Gastrocnemius medialis (tissue), 4 donors: ENCODE measurements at regions of chr15 and their contacts with region 1.

Region 1: DNA sequence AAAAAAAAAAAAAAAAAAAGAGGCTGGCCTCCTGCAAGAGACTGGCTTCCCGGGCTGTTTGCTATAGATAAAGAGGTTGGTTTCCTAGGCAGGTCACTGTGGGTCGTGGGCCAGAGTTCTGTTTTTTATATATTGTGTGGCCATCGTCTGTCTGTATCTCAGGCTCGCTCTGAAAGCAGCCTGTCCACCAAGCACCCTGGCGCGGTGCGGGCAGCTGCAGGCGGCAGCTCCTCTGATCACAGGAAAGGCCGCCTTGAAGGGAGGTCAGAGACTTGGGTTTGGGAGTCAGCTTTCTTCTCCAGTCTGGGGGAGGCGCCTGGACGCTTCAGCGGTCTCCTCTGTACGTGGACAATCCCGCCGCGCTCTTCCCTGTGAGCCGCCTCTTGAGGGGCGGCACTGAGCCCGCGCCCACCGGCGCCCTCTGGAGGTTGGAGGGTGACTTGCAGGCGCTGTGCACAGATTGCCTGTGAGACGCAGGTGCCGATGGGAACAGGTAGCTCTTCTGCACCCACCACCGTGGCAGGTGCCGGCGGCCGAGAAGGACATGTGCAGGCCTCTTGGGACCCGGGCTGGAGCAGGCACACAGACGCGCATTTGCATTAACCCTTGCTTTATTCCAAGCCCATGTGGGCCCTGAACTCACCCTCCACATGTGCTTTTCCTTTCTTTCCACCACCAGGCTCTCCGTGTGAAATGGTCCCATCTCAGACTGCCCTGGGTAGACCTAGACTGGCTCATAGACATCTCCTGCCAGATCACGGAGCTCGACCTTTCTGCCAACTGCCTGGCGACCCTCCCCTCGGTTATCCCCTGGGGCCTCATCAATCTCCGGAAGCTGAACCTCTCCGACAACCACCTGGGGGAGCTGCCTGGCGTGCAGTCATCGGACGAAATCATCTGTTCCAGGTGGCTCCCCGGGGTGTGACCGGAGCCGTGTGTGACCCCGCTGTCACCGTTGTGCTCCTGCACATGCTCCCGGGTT is 89.3 kb downstream of the LRRK1 start:
- DNase-seq: peak; percentile 35 to 61
- ATAC-seq: peak; percentile 63 to 84
- H3K4me3 ChIP-seq: peak overlapping the region; percentile 38 to 70 (median 52)
- H3K27ac ChIP-seq: no peak overlapping the region
- H3K4me1 ChIP-seq: no peaks in the 10 kb centered on the region
- H3K27me3 ChIP-seq: no peaks in the 10 kb centered on the region
- CTCF ChIP-seq: peak; percentile 58 to 97 (median 88)
- POLR2A ChIP-seq: no peak

Region 2: GRCh38 chr15:100341662-100342560 is 666.5 kb before region 1 on chr15 and contains the start of gene ADAMTS17:
- in situ Hi-C with region 1: loop called in 1 of 4 experiments (anchors 10 kb)
- intact Hi-C with region 1: loop called (anchors 5 kb)
- DNase-seq: peak; percentile 96 to 97
- ATAC-seq: peak; percentile 98 to 99
- H3K4me3 ChIP-seq: peak within 1 kb of the TSS; percentile 65 to 96 (median 76)
- H3K27ac ChIP-seq: peak within 1 kb of the TSS; percentile 78 to 90 (median 88)
- H3K4me1 ChIP-seq: peaks cover 7 to 10% of the 10 kb centered on the region in 2 donors
- H3K27me3 ChIP-seq: no peaks in the 10 kb centered on the region
- CTCF ChIP-seq: peak; percentile 85 to 98 (median 95)
- POLR2A ChIP-seq: peak; percentile 94 to 99
- total RNA-seq, gene ADAMTS17: 5.0 to 16.2 (median 11.6) TPM

Region 3: GRCh38 chr15:100627789-100628395 is 380.6 kb before region 1 on chr15:
- in situ Hi-C with region 1: loop called (anchors 5 to 10 kb)
- intact Hi-C with region 1: loop called (anchors 1 kb)
- DNase-seq: peak; percentile 35 to 50
- ATAC-seq: peak; percentile 83 to 91
- H3K4me3 ChIP-seq: no peak overlapping the region
- H3K27ac ChIP-seq: no peak overlapping the region
- H3K4me1 ChIP-seq: peaks cover 7 to 9% of the 10 kb centered on the region in 2 donors
- H3K27me3 ChIP-seq: no peaks in the 10 kb centered on the region
- CTCF ChIP-seq: peak; percentile 78 to 82 (median 81)
- POLR2A ChIP-seq: no peak

Region 4: DNA sequence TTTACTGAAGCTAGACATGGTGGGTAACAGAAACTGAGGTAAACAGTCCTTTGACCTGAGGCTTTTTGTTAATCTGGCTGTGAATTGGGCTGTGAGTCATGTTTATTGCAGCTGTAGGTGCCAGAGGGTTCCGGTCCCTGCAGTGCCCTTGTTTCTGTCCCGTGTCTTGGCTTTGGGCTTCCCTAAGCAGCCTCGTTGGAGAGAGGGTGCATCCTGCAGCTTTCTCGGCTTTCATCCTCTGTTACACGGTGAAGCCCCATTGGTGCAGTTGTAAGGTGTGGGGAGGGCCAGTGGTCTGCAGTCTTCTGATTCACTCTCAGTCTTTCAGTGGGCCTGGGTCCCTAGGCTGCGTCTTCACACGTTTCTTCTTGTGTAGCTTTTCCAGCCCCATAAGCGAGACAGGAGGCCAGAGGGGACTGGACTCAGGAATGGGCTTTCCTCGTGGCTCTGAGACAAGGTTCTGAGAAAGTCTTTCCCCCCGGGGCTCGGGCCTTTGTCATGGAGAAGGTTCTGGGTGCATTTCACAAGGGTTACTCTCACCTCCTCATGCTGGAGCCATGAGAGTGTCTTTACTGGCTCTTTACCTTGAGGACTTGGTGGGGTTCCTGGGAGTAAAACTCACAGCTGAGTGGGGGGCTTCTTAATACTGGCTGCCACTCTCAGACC is 372.9 kb before region 1 on chr15:
- in situ Hi-C with region 1: loop called in 1 of 4 experiments (anchors 10 kb)
- intact Hi-C with region 1: no loop called
- DNase-seq: no peak
- ATAC-seq: no peak
- H3K4me3 ChIP-seq: no peak overlapping the region
- H3K27ac ChIP-seq: no peak overlapping the region
- H3K4me1 ChIP-seq: peaks cover 5 to 16% of the 10 kb centered on the region in 2 donors
- H3K27me3 ChIP-seq: no peaks in the 10 kb centered on the region
- CTCF ChIP-seq: no peak
- POLR2A ChIP-seq: no peak

Region 5: GRCh38 chr15:100671858-100672543 is 336.4 kb before region 1 on chr15:
- in situ Hi-C with region 1: no loop called
- intact Hi-C with region 1: loop called (anchors 2 kb)
- DNase-seq: no peak
- ATAC-seq: peak in 1 of 2 donors; percentile 54
- H3K4me3 ChIP-seq: peak overlapping the region in 1 of 4 donors; percentile 7
- H3K27ac ChIP-seq: no peak overlapping the region
- H3K4me1 ChIP-seq: peaks cover 0 to 4% of the 10 kb centered on the region in 2 donors
- H3K27me3 ChIP-seq: peaks cover 0 to 4% (median 3%) of the 10 kb centered on the region in 3 donors
- CTCF ChIP-seq: peak in 3 of 5 experiments; percentile 11 to 40 (median 25)
- POLR2A ChIP-seq: no peak

Region 6: GRCh38 chr15:100873029-100873677 is 135.3 kb before region 1 on chr15:
- in situ Hi-C with region 1: no loop called
- intact Hi-C with region 1: loop called (anchors 10 kb)
- DNase-seq: peak in 1 of 2 donors; percentile 60
- ATAC-seq: peak; percentile 77 to 96
- H3K4me3 ChIP-seq: no peak overlapping the region
- H3K27ac ChIP-seq: no peak overlapping the region
- H3K4me1 ChIP-seq: no peaks in the 10 kb centered on the region
- H3K27me3 ChIP-seq: peaks cover 0 to 5% (median 0%) of the 10 kb centered on the region in 3 donors
- CTCF ChIP-seq: peak; percentile 83 to 95 (median 89)
- POLR2A ChIP-seq: no peak

Region 7: GRCh38 chr15:100918034-100918689 is 90.3 kb before region 1 on chr15:
- in situ Hi-C with region 1: loop called in 3 of 4 experiments (anchors 5 to 10 kb)
- intact Hi-C with region 1: loop called (anchors 1 kb)
- DNase-seq: peak; percentile 38 to 62
- ATAC-seq: peak; percentile 63 to 72
- H3K4me3 ChIP-seq: peak overlapping the region; percentile 54 to 67 (median 63)
- H3K27ac ChIP-seq: peak overlapping the region in 2 of 4 donors; percentile 14 to 19
- H3K4me1 ChIP-seq: no peaks in the 10 kb centered on the region
- H3K27me3 ChIP-seq: peaks cover 3 to 14% (median 11%) of the 10 kb centered on the region in 3 donors
- CTCF ChIP-seq: peak; percentile 68 to 87 (median 80)
- POLR2A ChIP-seq: no peak

Region 8: DNA sequence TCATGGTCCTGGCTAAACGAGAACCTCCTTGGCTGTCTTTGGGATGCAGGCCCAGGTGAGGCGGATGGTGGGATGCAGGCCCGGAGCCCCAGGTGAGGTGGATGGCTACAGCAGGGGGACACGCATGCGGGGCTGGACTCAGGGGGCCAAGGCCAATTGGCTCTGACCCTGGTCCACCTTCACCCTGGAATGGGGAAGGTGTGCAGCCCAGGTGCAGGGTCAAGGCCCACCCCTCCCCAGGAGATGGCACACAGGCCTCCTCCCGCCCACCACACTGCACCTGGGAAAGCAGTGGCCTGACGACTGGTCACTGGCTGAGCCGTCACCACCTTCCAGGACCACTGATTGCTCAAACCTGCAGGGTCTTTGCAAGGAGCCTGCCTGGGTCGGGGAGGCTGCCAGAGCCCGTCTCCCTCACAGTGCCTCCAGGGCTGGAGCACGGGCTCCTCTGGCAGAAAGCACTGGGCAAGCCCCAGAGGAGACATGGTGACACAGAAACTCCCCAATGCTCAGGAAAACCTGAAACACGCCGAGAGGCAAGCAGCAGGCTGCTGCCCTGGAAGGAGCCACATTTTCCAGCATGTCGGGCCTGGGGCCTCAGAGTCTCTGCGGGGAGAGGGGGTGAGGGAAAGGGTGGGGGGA is 70.4 kb after region 1 on chr15:
- in situ Hi-C with region 1: no loop called
- intact Hi-C with region 1: no loop called
- DNase-seq: no peak
- ATAC-seq: no peak
- H3K4me3 ChIP-seq: no peak overlapping the region
- H3K27ac ChIP-seq: no peak overlapping the region
- H3K4me1 ChIP-seq: no peaks in the 10 kb centered on the region
- H3K27me3 ChIP-seq: no peaks in the 10 kb centered on the region
- CTCF ChIP-seq: no peak
- POLR2A ChIP-seq: no peak